ENCODE measurements at regions of chr11 and their contacts with region 1.

Region 1: DNA sequence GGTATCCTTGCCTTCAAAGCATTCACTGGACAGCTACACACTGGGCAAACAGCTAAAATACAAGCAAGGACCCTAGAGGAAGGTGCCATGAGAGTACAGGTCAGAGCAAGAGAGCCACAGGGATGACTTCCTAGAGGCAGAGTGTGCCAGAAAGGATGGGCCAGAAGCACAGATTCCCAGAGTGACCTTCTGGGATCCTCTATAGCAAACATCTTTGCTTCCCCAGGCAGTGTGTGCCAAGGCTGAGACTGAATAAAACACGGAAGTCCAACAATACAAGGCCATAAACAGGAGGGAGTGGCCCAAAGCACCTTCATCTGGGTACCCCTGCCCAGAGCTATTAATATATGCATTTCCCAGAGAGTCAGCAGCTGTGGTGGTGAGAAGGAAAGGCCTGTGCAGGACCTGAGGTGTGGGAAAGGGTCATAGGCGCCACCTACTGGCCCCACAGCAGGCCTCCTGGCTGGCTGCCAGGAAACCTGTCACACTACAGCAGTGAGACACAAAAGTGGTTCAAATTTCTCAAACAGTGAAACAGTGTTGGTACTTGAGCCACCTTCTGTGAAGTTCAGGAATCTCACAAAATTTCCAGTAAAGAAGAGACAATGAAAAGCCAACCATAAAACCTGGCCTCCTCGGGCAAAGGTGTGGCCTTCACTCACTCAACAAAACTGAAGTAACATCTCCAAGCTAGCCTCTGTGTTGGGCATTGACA is 20.3 kb downstream of the CLPB start:
- DNase-seq: peak; percentile 91
- H3K4me3 Mint-ChIP-seq: no peak overlapping the region
- H3K27ac Mint-ChIP-seq: no peak overlapping the region
- H3K4me1 Mint-ChIP-seq: peaks cover 26% of the 10 kb centered on the region
- H3K27me3 Mint-ChIP-seq: no peaks in the 10 kb centered on the region

Region 2: GRCh38 chr11:71585678-71586077 is 828.4 kb before region 1 on chr11:
- CTCF ChIA-PET with region 1: no interaction called
- intact Hi-C with region 1: no loop called
- DNase-seq: no peak
- H3K4me3 Mint-ChIP-seq: no peak overlapping the region
- H3K27ac Mint-ChIP-seq: no peak overlapping the region
- H3K4me1 Mint-ChIP-seq: peaks cover 6% of the 10 kb centered on the region
- H3K27me3 Mint-ChIP-seq: peaks cover 20% of the 10 kb centered on the region

Region 3: DNA sequence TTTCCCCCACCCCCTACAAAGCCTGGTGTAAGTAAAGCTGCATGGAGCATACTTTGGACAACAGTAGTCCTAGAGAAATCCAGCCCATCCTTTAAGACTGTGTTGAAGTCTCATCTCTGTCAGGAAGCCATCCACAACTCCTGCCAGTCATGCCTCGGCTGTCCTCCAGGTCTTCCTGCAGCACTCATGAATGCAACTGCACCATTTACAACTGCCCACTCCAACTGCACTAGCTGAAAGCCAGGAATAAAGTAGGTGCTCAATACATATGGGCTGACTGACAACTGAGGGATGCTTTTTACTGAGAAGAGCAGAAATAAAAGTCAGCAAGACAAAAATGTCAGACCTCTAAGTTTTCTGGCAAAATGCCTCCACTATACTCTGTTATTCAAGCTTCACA is 388.0 kb before region 1 on chr11:
- CTCF ChIA-PET with region 1: no interaction called
- intact Hi-C with region 1: no loop called
- DNase-seq: no peak
- H3K4me3 Mint-ChIP-seq: no peak overlapping the region
- H3K27ac Mint-ChIP-seq: peak overlapping the region; percentile 84
- H3K4me1 Mint-ChIP-seq: peaks cover 37% of the 10 kb centered on the region
- H3K27me3 Mint-ChIP-seq: no peaks in the 10 kb centered on the region

Region 4: GRCh38 chr11:72293910-72294615 is 120.0 kb before region 1 on chr11:
- CTCF ChIA-PET with region 1: interaction called, 10 read pairs
- intact Hi-C with region 1: loop called (anchors 1 kb)
- DNase-seq: no peak
- H3K4me3 Mint-ChIP-seq: no peak overlapping the region
- H3K27ac Mint-ChIP-seq: no peak overlapping the region
- H3K4me1 Mint-ChIP-seq: no peaks in the 10 kb centered on the region
- H3K27me3 Mint-ChIP-seq: no peaks in the 10 kb centered on the region

Region 5: DNA sequence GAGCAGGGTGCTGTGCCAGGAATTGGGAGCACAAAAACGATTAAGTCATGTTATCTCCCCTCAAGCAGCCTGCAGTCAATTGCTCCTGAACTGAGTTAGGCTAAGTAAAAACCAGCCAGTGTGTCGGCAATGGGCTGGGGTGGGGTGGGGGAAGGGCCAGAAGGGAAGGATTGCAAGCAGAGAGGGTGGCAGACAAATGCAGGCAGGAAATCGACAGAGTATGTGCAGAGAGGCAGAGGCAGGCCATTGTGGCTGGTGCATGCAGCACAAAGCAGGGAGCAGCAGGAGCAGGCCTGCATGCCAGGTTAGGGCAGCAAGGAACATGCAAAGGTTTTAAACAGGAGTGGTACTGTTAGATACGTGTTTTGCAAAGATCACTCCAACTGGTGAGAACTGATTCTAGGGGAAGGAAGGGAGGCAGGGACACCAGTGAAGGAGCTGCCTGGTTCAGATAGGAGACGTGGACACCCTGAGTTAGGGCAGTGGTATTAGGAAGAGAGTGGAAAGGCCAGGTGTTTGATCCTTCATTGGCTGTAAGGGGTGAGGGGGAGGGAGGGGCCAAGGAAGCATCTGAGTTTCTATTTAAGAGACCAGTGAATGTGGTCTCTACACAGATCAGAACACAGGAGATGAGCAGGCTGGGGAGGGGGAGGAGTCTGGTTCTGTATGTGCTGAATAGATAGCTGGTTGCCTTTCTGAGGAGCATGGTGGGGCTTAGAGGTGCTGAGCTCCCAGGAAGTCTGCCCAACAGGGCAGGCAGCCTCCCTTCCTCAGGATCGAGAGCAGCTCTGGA is 99.3 kb before region 1 on chr11:
- CTCF ChIA-PET with region 1: interaction called, 13 read pairs
- intact Hi-C with region 1: no loop called
- DNase-seq: no peak
- H3K4me3 Mint-ChIP-seq: no peak overlapping the region
- H3K27ac Mint-ChIP-seq: no peak overlapping the region
- H3K4me1 Mint-ChIP-seq: no peaks in the 10 kb centered on the region
- H3K27me3 Mint-ChIP-seq: no peaks in the 10 kb centered on the region

Region 6: GRCh38 chr11:72328366-72329224 is 85.5 kb before region 1 on chr11:
- CTCF ChIA-PET with region 1: interaction called, 7 read pairs
- intact Hi-C with region 1: loop called (anchors 5 kb)
- DNase-seq: no peak
- H3K4me3 Mint-ChIP-seq: no peak overlapping the region
- H3K27ac Mint-ChIP-seq: no peak overlapping the region
- H3K4me1 Mint-ChIP-seq: peaks cover 14% of the 10 kb centered on the region
- H3K27me3 Mint-ChIP-seq: no peaks in the 10 kb centered on the region

Region 7: DNA sequence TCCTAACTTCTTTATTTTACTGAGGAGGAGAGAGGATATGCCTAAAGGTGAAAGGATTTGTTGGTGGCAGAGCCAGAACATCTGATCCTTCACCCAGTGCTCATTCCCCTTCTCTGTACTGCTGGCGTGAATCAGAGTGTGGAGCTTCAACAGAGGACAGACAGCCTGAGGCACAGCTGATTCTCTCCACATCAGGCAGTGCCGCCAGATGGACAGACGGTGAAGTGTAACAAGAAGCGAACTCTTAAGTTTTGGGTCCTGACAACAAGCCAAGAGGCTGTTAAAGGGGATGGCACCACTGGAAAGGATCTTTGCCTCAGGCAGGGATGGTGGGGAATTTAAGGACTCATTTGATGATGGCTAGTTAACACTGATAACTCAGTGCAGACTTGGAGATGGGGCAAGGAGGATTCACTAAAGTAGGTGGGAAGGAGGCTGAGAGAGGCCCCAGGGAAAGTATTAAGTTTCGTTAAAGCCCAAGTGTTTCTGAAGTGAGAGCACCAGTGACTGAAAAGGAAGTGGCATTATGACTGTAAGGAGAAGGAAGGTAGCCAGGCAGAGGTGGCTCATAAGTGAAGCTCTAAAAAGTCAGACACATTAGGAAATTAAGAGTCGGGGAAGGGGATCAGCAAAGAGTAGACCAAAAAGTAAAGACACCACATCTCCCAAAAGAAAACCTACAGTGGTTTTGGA is 61.1 kb before region 1 on chr11:
- CTCF ChIA-PET with region 1: interaction called, 6 read pairs
- intact Hi-C with region 1: loop called (anchors 5 kb)
- DNase-seq: peak; percentile 45
- H3K4me3 Mint-ChIP-seq: no peak overlapping the region
- H3K27ac Mint-ChIP-seq: no peak overlapping the region
- H3K4me1 Mint-ChIP-seq: no peaks in the 10 kb centered on the region
- H3K27me3 Mint-ChIP-seq: no peaks in the 10 kb centered on the region

Region 8: GRCh38 chr11:73072901-73073481 is 658.9 kb after region 1 on chr11:
- CTCF ChIA-PET with region 1: no interaction called
- intact Hi-C with region 1: no loop called
- DNase-seq: no peak
- H3K4me3 Mint-ChIP-seq: no peak overlapping the region
- H3K27ac Mint-ChIP-seq: no peak overlapping the region
- H3K4me1 Mint-ChIP-seq: peaks cover 27% of the 10 kb centered on the region
- H3K27me3 Mint-ChIP-seq: no peaks in the 10 kb centered on the region

Measured in activated naive CD4-positive, alpha-beta T cell treated with anti-CD3 and anti-CD28 coated beads for 36 hours (primary cell).